Adrenal gland (tissue), 19 donors: ENCODE measurements at regions of chr5 and their contacts with region 1.

Region 1: DNA sequence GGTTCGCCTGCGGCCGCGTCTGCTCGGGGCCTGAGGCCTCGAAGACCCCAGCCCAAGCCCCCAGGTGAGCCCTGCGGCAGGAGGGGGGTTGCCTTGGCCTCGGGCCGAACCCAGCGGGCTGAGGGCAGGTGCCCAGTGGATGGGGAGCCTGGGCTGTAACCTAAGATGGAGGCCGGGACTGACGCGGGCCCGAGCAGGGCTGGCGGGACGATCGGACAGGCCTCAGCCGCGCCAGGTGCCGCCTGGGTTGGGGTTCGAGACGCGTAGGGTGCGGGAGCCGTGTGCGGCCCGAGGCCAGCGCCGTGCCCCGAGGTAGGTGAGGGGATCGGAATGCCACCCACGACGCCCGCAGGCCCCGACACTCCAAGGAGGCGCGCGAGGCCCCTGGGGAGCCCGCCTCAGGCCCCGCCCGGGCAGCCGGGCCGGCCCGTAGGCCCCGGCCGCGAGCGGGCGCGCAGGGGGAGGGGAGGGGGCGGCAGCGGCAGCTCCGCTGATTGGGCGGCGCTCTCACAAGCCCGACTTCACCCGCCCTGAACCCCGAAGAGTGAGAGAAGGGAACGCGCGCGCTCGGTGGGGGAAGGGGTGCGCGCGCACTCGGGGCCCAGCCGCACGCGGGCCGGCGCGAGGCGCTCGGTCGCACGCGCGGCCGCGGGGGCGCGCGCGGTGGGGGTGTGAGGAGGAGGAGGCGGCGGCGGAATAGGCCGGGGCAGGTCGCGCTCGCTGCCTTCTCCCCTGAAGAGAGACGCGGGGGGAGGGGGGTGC is at the start of gene NSD1:
- DNase-seq: peak; percentile 84 to 93 (median 89)
- H3K4me3 ChIP-seq: peak within 1 kb of the TSS; percentile 33 to 73 (median 50)
- H3K27ac ChIP-seq: peak within 1 kb of the TSS; percentile 39 to 95 (median 89)
- H3K4me1 ChIP-seq: peaks cover 27 to 44% of the 10 kb centered on the region in 2 donors
- H3K27me3 ChIP-seq: no peaks in the 10 kb centered on the region
- CTCF ChIP-seq: no peak
- POLR2A ChIP-seq: peak; percentile 45 to 64
- total RNA-seq, gene NSD1: 21.3 to 73.9 (median 49.6) TPM

Region 2: GRCh38 chr5:177303121-177303924 is 170.1 kb after region 1 on chr5 and contains the starts of genes PRELID1 and RAB24:
- intact Hi-C with region 1: loop called in 1 of 2 experiments (anchors 10 kb)
- DNase-seq: peak; percentile 81 to 94 (median 90)
- H3K4me3 ChIP-seq: peak within 1 kb of the TSS; percentile 83 to 98 (median 94)
- H3K27ac ChIP-seq: peak within 1 kb of the TSS in 4 of 5 donors; percentile 65 to 89 (median 73)
- H3K4me1 ChIP-seq: peaks cover 24 to 39% of the 10 kb centered on the region in 2 donors
- H3K27me3 ChIP-seq: no peaks in the 10 kb centered on the region
- CTCF ChIP-seq: peak in 1 of 6 experiments; percentile 15
- POLR2A ChIP-seq: peak; percentile 14 to 70
- total RNA-seq, gene PRELID1: 52.3 to 164 (median 97.4) TPM
- total RNA-seq, gene RAB24: 36.9 to 72.6 (median 51.3) TPM